ENCODE measurements at regions of chr2 and their contacts with region 1.

Region 1: GRCh38 chr2:158745044-158745865 is 49.9 kb upstream of the DAPL1 start:
- DNase-seq: peak; percentile 68
- H3K4me3 ChIP-seq: no peak overlapping the region
- H3K27ac ChIP-seq: no peak overlapping the region
- H3K4me1 ChIP-seq: no peaks in the 10 kb centered on the region
- H3K27me3 ChIP-seq: no peaks in the 10 kb centered on the region
- CTCF ChIP-seq: peak; percentile 67

Region 2: DNA sequence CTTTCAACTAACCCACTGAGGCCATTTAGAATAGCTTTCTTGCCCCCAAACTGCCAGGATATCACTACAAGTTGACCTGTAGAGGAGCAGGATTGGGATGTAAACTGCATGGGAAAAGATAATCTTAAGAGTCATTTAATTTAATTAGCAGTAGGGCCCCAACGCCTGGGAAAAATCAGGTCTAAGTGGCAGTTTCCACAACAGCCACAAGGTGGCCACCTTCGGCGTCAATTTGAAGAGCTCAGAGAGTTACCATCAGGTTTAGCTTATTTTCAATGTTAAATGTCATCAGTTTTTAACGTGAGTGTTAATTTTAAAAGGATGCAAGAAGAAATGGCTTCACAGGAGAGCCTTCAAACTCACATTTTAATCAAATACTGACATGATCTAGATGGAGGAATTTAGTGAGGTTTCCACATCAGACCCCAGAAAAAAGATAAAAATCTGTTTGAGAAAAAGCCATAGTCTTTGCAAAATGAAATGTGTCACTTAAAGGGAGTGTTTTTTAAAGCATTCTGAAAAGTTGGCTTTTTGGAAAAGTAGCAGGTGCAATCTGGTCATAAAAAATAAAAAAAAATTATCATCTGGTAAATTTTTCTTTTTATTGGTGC is 720.9 kb before region 1 on chr2:
- CTCF ChIA-PET with region 1: interaction called, 29 read pairs
- POLR2A ChIA-PET with region 1: no interaction called
- intact Hi-C with region 1: loop called (anchors 2 kb)
- DNase-seq: peak; percentile 69
- H3K4me3 ChIP-seq: no peak overlapping the region
- H3K27ac ChIP-seq: no peak overlapping the region
- H3K4me1 ChIP-seq: peaks cover 1% of the 10 kb centered on the region
- H3K27me3 ChIP-seq: no peaks in the 10 kb centered on the region
- CTCF ChIP-seq: peak; percentile 94

Region 3: DNA sequence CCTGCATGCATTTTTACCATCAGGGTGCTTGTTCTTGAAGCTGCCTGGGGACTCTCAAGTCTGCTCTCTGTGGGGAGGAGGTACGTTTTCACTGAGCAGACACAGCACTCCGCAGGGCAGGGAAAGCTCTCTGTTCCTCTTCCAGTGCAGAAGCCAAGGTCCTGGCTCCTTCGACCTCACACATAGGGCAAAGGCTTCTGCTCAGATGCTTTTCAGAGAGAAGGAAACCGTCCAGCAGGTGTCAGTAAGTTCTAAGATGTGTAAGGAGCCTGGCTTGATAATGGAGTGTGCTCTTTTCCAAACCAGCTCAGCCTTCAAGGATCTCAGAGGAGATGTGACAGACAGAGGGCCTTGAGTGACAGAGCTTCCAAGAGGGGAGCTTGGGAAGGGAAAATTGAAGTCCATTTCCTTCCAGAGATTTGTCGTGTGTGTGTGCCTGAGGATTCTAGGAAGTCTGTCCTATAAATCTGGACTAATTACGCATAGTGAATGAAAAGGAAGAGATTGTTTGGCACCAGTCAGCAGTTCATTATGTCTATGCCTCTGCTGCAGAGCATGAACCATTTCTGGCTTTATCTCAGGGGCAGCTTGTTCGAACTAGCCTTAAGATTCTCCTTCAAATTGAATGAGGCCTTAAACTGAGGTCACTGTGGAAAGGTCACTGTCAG is 710.9 kb before region 1 on chr2:
- CTCF ChIA-PET with region 1: interaction called, 10 read pairs
- POLR2A ChIA-PET with region 1: no interaction called
- intact Hi-C with region 1: loop called (anchors 2 kb)
- DNase-seq: peak; percentile 87
- H3K4me3 ChIP-seq: no peak overlapping the region
- H3K27ac ChIP-seq: no peak overlapping the region
- H3K4me1 ChIP-seq: peaks cover 18% of the 10 kb centered on the region
- H3K27me3 ChIP-seq: no peaks in the 10 kb centered on the region
- CTCF ChIP-seq: peak; percentile 74